ENCODE measurements at regions of chr5 and their contacts with region 1.

Region 1: GRCh38 chr5:149960272-149961185 is at the start of gene SLC26A2:
- DNase-seq: peak; percentile 98
- H3K4me3 Mint-ChIP-seq: peak within 1 kb of the TSS; percentile 97
- H3K27ac Mint-ChIP-seq: peak within 1 kb of the TSS; percentile 100
- H3K4me1 Mint-ChIP-seq: peaks cover 28% of the 10 kb centered on the region
- H3K27me3 Mint-ChIP-seq: no peaks in the 10 kb centered on the region
- total RNA-seq, gene SLC26A2: 8.3 and 9.0 TPM in 2 replicates

Region 2: DNA sequence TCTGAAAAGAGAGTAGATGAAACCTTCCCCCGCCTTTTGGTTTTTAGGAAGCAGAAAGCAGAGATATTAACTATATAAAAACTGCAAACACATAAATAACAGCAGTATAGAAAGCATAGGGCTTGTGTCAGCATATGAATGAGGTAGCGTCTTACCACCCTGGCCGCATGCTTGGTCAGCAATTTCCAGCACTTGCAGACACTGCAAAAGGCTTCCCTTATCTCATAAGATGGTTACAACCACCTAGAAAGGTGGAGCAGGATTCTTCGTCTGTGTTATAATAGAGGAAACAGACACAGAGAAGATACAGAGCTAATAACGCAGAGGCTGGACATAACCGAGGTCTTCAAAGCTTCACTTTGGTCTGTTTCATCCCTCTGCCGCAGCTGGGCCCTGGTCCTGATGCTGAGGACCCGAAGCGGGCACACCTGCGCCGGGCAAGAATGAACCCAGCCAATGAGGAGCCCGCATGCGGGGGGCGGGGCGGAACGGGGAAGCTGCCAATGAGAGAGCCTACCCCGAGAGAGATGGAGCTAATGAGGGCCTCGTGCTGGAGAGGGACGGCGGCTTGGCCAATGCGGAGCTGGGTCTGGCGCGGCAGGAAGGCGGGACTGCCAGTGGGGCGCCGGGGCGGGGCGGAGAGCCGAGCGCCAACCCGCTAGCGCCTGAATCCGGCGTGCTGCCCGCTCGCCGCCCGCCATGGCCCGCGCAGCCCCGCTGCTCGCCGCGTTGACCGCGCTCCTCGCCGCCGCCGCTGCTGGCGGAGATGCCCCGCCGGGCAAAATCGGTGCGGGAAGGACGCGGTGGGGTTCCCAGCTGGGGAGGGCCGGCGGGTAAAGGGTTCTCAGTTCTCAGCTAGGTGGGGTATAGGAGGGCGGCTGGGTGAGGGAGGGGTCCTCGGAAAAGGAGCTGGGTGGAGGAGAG is 602.9 kb before region 1 on chr5 and contains the start of gene PCYOX1L:
- intact Hi-C with region 1: loop called (anchors 10 kb)
- DNase-seq: peak; percentile 99
- H3K4me3 Mint-ChIP-seq: peak within 1 kb of the TSS; percentile 90
- H3K27ac Mint-ChIP-seq: peak within 1 kb of the TSS; percentile 83
- H3K4me1 Mint-ChIP-seq: peaks cover 60% of the 10 kb centered on the region
- H3K27me3 Mint-ChIP-seq: no peaks in the 10 kb centered on the region
- total RNA-seq, gene PCYOX1L: 19.8 and 21.2 TPM in 2 replicates

Region 3: DNA sequence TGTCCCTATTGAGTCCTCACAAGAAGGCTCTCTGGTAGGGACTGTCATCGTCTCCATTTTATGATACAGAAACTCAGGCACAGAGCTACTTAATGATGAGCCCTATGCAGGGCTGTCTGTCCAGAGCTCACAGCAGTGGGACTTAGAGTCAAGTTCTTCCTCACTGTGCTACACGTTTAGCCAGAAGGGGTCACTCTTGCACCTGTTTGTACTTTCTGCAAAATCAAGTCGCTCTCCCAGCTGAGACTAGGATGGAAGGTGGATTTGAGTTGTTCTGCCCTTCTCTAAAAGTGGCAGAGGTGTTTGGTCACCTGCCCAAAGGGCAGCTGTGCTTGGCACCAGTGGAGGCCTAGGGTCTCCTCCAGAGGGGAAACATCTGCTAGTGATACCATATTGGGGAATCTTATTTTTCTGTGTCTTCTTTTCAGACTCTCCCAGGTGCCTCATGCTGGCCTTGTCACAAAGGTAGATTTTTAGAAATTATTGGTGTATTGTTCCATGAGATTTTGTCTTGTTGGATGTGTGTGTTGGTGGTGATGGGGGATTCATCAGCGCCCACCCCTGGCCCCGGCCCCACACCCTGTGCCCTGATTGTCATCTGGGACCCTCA is 126.2 kb before region 1 on chr5:
- intact Hi-C with region 1: loop called (anchors 1 kb)
- DNase-seq: peak; percentile 88
- H3K4me3 Mint-ChIP-seq: no peak overlapping the region
- H3K27ac Mint-ChIP-seq: no peak overlapping the region
- H3K4me1 Mint-ChIP-seq: peaks cover 10% of the 10 kb centered on the region
- H3K27me3 Mint-ChIP-seq: no peaks in the 10 kb centered on the region

Region 4: DNA sequence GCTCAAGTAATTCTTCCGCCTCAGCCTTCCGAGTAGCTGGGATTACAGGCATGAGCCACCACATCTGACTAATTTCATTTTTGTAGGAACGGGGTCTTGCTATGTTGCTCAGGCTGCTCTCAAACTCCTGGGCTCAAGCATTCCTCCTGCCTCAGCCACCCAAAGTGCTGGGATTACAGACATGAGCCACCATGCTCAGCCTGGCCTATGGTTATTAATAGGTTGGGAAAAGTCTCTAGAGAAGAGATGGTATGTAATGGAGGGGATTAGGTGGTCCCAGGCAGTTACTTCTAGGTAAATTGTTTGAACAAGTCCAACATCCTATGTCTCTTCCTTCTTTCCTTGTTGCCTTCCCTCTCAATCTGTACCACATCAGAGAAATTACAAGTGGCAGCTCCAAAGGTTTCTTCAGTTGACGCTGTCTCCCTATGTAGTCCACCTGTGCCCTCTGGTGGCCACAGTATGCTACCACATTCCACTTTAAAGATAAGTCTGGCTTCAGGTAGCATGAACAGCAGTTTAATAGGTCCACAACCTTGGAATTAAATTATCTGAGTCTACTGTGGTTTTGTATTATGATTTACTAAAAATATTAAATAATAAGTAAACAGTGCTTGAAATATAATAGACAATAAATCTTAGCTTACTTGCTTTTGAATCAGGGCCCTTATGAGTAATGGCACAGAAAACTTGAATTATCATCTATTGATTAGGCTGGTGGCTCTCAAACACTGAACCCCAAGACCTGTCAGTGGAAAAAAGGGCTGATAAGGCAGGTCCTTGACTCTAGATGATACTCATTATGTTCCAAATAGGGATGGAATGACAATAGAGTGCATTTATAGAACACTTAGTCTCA is 30.2 kb after region 1 on chr5:
- intact Hi-C with region 1: loop called (anchors 2 kb)
- DNase-seq: peak; percentile 89
- H3K4me3 Mint-ChIP-seq: no peak overlapping the region
- H3K27ac Mint-ChIP-seq: no peak overlapping the region
- H3K4me1 Mint-ChIP-seq: no peaks in the 10 kb centered on the region
- H3K27me3 Mint-ChIP-seq: no peaks in the 10 kb centered on the region

Region 5: GRCh38 chr5:150192462-150192861 is 231.9 kb after region 1 on chr5:
- intact Hi-C with region 1: no loop called
- DNase-seq: no peak
- H3K4me3 Mint-ChIP-seq: no peak overlapping the region
- H3K27ac Mint-ChIP-seq: no peak overlapping the region
- H3K4me1 Mint-ChIP-seq: no peaks in the 10 kb centered on the region
- H3K27me3 Mint-ChIP-seq: peaks cover 32% of the 10 kb centered on the region

Measured in activated CD4-positive, alpha-beta T cell treated with anti-CD3 and anti-CD28 coated beads, Interleukin-2, amount 10 ng/mL, durations not matched to agents 24 days and 14 days (primary cell).